ENCODE measurements at regions of chr11 and their contacts with region 1.

Region 1: DNA sequence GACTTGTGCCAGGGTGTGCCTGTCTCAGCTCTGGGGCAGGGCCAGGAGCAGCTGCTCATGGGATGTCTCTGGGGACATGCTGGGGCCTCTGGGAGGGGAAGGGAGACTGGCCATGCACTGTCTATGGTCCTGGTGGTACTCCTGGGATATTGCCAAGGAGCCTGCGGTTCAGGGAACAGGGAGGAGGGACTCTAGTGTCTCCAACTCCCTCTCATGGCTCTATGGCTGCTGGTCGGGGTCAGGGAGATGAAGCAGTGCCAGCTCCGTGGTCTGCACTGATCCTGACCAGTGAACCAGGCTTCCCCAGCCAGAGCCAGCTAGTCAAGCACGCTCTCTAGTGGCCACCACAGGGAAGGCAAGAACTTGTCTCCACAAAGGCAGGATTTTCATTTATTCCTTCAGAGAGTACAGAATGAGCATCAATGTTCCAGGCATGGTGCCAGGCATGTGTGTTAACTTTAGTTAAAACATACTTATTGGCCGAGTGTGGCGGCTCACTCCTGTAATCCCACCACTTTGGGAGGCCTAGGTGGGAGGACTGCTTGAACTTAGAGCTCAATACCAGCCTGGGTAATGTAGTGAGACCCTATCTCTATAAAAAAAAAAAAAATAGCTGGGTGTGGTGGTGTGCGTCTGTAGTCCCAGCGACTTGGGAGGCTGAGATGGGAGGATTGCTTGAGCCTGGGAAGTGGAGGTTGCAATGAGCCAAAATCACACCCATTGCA is 2.5 kb upstream of the BEST1 start:
- DNase-seq: peak; percentile 81
- H3K27ac ChIP-seq: no peak overlapping the region
- CTCF ChIP-seq: peak; percentile 92

Region 2: DNA sequence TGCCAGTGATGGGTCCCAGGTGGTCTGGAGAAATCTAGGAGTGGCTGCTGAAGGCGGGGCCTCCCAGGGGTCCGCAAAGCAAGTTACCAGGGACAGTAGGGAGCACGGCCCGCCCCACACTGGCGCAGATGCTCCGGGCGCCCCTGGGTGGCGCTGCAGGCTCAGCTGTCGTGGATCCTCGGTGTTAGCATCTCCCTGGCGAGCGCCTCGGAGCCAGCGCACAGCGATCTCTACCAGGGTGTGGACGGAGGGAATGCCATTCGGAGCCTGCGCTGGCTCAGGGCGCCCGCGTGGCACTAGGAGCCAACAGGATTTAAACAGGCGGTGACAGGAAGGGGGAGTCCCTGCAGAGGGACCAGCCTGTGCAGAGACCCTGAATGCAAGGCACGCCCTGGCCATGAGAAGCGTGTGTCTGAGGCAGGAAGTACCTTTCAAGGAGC is 76.5 kb before region 1 on chr11:
- CTCF ChIA-PET with region 1: interaction called, 28 read pairs
- POLR2A ChIA-PET with region 1: no interaction called
- DNase-seq: peak; percentile 87
- H3K27ac ChIP-seq: peak overlapping the region; percentile 71
- CTCF ChIP-seq: peak; percentile 93

Region 3: GRCh38 chr11:62033191-62034044 is 85.8 kb after region 1 on chr11:
- CTCF ChIA-PET with region 1: no interaction called
- POLR2A ChIA-PET with region 1: no interaction called
- DNase-seq: peak; percentile 33
- H3K27ac ChIP-seq: no peak overlapping the region
- CTCF ChIP-seq: no peak

Region 4: DNA sequence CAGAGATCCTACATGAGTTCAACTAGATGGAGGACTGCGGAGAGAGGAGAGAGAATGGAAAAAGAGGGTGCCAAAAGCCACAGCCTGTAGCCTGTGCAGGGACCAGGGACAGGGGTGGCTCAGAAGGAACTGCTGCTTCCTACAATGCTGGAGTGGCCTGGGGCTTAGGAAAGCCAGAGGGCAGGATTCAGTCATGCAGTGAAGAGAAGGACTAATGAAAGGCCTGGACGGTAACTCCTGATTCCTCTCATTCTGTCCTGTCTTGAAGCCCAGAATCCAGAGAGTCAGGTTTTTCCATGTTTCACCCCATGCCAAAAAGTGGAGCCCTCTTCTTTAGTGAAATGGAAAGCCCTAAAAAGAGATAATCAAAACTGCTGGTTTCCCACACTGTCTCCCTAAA is 127.8 kb after region 1 on chr11:
- CTCF ChIA-PET with region 1: no interaction called
- POLR2A ChIA-PET with region 1: no interaction called
- DNase-seq: no peak
- H3K27ac ChIP-seq: no peak overlapping the region
- CTCF ChIP-seq: no peak

Region 5: GRCh38 chr11:62108017-62108750 is 160.5 kb after region 1 on chr11:
- CTCF ChIA-PET with region 1: interaction called, 17 read pairs
- POLR2A ChIA-PET with region 1: no interaction called
- DNase-seq: peak; percentile 59
- H3K27ac ChIP-seq: no peak overlapping the region
- CTCF ChIP-seq: peak; percentile 81